ENCODE measurements at regions of chr4 and their contacts with region 1.

Region 1: GRCh38 chr4:16205298-16206164 is 20.7 kb downstream of the TAPT1 start:
- DNase-seq: no peak
- H3K4me3 Mint-ChIP-seq: no peak overlapping the region
- H3K27ac Mint-ChIP-seq: no peak overlapping the region
- H3K4me1 Mint-ChIP-seq: peaks cover 21% of the 10 kb centered on the region
- H3K27me3 Mint-ChIP-seq: no peaks in the 10 kb centered on the region

Region 2: GRCh38 chr4:16082426-16083240 is 122.9 kb before region 1 on chr4:
- CTCF ChIA-PET with region 1: no interaction called
- DNase-seq: peak; percentile 25
- H3K4me3 Mint-ChIP-seq: peak overlapping the region; percentile 28
- H3K27ac Mint-ChIP-seq: no peak overlapping the region
- H3K4me1 Mint-ChIP-seq: peaks cover 15% of the 10 kb centered on the region
- H3K27me3 Mint-ChIP-seq: peaks cover 83% of the 10 kb centered on the region

Region 3: GRCh38 chr4:16217300-16218051 is 11.9 kb after region 1 on chr4:
- CTCF ChIA-PET with region 1: interaction called, 14 read pairs
- DNase-seq: no peak
- H3K4me3 Mint-ChIP-seq: no peak overlapping the region
- H3K27ac Mint-ChIP-seq: peak overlapping the region; percentile 78
- H3K4me1 Mint-ChIP-seq: peaks cover 67% of the 10 kb centered on the region
- H3K27me3 Mint-ChIP-seq: no peaks in the 10 kb centered on the region

Region 4: GRCh38 chr4:16310606-16311005 is 105.1 kb after region 1 on chr4:
- CTCF ChIA-PET with region 1: no interaction called
- DNase-seq: no peak
- H3K4me3 Mint-ChIP-seq: no peak overlapping the region
- H3K27ac Mint-ChIP-seq: no peak overlapping the region
- H3K4me1 Mint-ChIP-seq: no peaks in the 10 kb centered on the region
- H3K27me3 Mint-ChIP-seq: no peaks in the 10 kb centered on the region

Measured in activated naive CD4-positive, alpha-beta T cell treated with anti-CD3 and anti-CD28 coated beads, Interleukin-2, amount 10 ng/mL, durations not matched to agents 7 days and 5 days (primary cell).